ENCODE measurements at regions of chr11 and their contacts with region 1.

Region 1: DNA sequence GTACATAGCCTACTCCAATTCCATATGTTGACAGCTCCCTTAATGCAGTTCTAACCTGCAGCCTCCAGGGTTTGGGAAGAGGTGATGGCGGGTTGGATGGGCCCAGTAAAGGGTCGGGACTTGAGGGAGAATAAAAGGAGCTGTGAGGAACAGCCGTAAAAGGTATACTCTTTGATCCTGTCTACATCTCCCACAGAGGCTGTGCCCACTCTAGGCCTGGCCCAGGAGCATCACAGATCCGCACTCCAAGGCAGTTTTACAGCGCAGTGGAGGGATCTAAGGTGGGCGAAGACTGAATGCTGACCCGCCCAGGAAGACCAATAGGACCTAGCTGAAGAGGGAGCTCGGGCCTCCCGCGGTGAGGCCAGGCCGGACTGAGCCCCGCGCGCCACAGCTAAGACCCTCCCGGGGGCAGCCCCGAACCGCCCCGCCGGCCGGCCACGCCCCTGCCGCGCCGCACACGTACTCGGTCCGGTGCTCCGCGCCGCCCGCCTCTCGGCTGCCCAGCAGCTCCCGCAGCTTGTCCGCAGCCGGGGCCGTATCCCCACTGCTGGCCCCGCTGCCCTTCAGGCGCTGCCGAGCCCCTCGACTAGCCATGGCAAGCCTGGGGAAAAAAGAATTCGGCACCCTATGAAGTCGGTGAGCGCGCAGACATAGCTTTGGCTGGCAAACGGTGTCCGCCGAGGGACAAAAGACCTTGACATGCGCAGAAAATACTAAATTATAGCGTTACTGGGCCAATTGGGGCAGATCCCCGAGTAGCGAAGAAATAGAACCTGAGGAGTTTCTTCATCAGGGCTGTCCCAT is at the start of gene ALG9:
- DNase-seq: peak; percentile 88 to 92 (median 89)
- ATAC-seq: peak; percentile 96
- H3K4me3 ChIP-seq: peak within 1 kb of the TSS; percentile 83
- H3K27ac ChIP-seq: peak within 1 kb of the TSS; percentile 71
- H3K4me1 ChIP-seq: peaks cover 3 to 4% of the 10 kb centered on the region in 2 experiments; a peak in 2 of 5 replicates
- H3K27me3 ChIP-seq: no peaks in the 10 kb centered on the region
- CTCF ChIP-seq: peak; percentile 24 to 60 (median 32); a peak in 3 of 6 replicates
- EP300 ChIP-seq: peak; percentile 21; the same call in 1 of the 2 replicates
- POLR2A ChIP-seq: peak; percentile 82
- RAD21 ChIP-seq: no peak
- polyA plus RNA-seq, gene ALG9: 11.5 to 12.2 TPM

Region 2: GRCh38 chr11:111855506-111855905 is 15.6 kb before region 1 on chr11:
- CTCF ChIA-PET with region 1: no interaction called
- POLR2A ChIA-PET with region 1: interaction called, 17 read pairs
- in situ Hi-C with region 1: no loop called
- intact Hi-C with region 1: no loop called
- DNase-seq: no peak
- ATAC-seq: no peak
- H3K4me3 ChIP-seq: no peak overlapping the region
- H3K27ac ChIP-seq: no peak overlapping the region
- H3K4me1 ChIP-seq: no peaks in the 10 kb centered on the region
- H3K27me3 ChIP-seq: no peaks in the 10 kb centered on the region
- CTCF ChIP-seq: no peak
- EP300 ChIP-seq: no peak
- POLR2A ChIP-seq: no peak
- RAD21 ChIP-seq: no peak